Activated CD8-positive, alpha-beta memory T cell treated with anti-CD3 and anti-CD28 coated beads, Interleukin-2, amount 10 ng/mL, durations not matched to agents 7 days and 5 days (primary cell): ENCODE measurements at regions of chr14 and their contacts with region 1.

Region 1: GRCh38 chr14:105369653-105370040 is 28.7 kb upstream of the TEX22 start:
- DNase-seq: no peak
- ATAC-seq: no peak
- H3K4me3 Mint-ChIP-seq: no peak overlapping the region
- H3K27ac Mint-ChIP-seq: no peak overlapping the region
- H3K4me1 Mint-ChIP-seq: peaks cover 9% of the 10 kb centered on the region
- H3K27me3 Mint-ChIP-seq: no peaks in the 10 kb centered on the region

Region 2: DNA sequence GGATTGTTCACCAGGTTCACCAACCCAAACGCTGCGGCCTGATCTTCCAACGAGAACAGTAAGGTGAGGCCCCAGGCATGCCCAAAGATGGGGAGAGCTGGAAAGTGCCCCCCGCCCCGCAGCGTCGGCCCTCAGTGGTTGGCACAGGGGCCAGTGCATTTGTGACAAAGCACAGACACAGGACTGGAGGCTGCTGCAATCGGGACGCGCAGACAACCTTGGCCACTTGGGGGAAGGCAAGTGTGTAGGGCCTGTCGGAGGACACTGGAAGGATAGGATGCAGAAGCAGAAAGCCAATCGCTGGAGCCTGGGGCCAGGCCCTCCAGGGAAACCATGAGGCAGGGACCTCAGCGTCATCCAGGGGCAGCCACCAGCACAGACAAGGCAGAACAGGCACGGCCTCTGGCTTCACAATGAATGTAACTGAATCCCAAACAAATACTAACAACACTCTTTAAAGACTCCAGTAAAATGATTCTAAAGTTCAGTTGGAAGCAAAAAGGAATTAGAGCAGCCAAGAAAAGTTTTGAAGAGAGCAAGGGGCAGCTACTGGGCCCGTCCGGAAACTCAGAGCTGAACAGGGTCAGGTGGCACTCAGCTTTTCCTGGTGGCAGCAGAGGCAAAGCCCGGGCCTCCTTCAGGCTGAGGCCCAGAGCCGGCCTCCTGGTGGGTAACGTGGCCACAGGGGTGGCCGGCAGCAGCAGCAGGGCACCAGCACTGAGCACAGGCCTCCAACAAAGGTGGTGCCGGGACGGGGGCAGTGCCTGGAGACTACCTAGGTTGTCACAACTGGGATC is 82.1 kb before region 1 on chr14:
- CTCF ChIA-PET with region 1: no interaction called
- DNase-seq: no peak
- ATAC-seq: no peak
- H3K4me3 Mint-ChIP-seq: no peak overlapping the region
- H3K27ac Mint-ChIP-seq: no peak overlapping the region
- H3K4me1 Mint-ChIP-seq: peaks cover 28% of the 10 kb centered on the region
- H3K27me3 Mint-ChIP-seq: no peaks in the 10 kb centered on the region

Region 3: DNA sequence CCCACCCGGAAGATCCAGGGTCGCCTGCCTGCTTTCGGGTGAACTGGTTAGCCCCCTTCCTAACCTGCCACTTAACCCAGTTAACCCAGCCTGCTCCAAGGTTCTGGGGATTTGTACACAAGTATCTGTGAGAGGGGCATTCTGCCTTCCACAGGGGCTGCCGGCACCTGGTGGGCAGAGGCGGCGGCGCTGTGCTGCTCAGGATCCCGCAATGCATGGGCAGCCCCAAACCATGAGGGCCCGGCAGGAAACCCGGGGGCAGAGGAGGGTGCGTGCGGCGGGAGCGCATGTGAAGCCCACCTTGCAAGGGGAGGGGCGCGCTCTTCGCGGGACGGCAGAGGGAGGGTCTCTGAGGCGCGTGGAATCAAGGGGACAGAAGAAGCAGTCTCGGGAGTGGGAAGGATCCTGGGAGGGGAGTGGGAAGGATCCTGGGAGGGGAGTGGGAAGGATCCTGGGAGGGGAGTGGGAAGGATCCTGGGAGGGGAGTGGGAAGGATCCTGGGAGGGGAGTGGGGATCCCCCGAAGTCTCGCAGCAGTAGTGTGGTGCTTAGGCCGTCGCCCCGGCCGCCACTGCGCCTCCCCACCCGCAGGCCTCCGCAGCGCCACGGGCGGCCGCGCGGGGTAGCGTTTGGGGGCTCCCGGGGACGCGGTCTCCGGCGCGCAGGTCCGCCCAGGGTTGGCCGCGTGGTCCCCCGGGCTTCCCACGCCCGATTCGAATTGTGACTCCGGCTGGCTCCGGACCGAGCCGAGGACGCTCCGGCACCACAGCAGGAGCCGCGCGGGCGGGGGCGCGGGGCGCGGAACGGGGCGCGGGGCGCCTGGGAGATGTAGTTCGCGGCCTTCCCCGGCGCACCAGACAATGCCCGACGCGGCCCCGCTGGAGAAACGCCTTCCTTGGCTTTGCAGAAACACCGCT is 45.1 kb after region 1 on chr14:
- CTCF ChIA-PET with region 1: interaction called, 10 read pairs
- DNase-seq: peak; percentile 68
- ATAC-seq: peak; percentile 81
- H3K4me3 Mint-ChIP-seq: peak overlapping the region; percentile 55
- H3K27ac Mint-ChIP-seq: no peak overlapping the region
- H3K4me1 Mint-ChIP-seq: peaks cover 12% of the 10 kb centered on the region
- H3K27me3 Mint-ChIP-seq: peaks cover 42% of the 10 kb centered on the region

Region 4: GRCh38 chr14:105430535-105430934 is 60.9 kb after region 1 on chr14:
- CTCF ChIA-PET with region 1: no interaction called
- DNase-seq: no peak
- ATAC-seq: no peak
- H3K4me3 Mint-ChIP-seq: no peak overlapping the region
- H3K27ac Mint-ChIP-seq: no peak overlapping the region
- H3K4me1 Mint-ChIP-seq: peaks cover 19% of the 10 kb centered on the region
- H3K27me3 Mint-ChIP-seq: no peaks in the 10 kb centered on the region

Region 5: GRCh38 chr14:105480952-105481801 is 111.5 kb after region 1 on chr14:
- CTCF ChIA-PET with region 1: interaction called, 29 read pairs
- DNase-seq: peak; percentile 92
- ATAC-seq: peak; percentile 60
- H3K4me3 Mint-ChIP-seq: peak overlapping the region; percentile 47
- H3K27ac Mint-ChIP-seq: peak overlapping the region; percentile 95
- H3K4me1 Mint-ChIP-seq: peaks cover 26% of the 10 kb centered on the region
- H3K27me3 Mint-ChIP-seq: peaks cover 23% of the 10 kb centered on the region

Region 6: GRCh38 chr14:105527661-105528581 is 158.3 kb after region 1 on chr14:
- CTCF ChIA-PET with region 1: interaction called, 19 read pairs
- DNase-seq: peak; percentile 85
- ATAC-seq: peak; percentile 70
- H3K4me3 Mint-ChIP-seq: peak overlapping the region; percentile 61
- H3K27ac Mint-ChIP-seq: peak overlapping the region; percentile 52
- H3K4me1 Mint-ChIP-seq: peaks cover 21% of the 10 kb centered on the region
- H3K27me3 Mint-ChIP-seq: peaks cover 24% of the 10 kb centered on the region